Caco-2 (cell line): ENCODE measurements at regions of chr10 and their contacts with region 1.

Region 1: GRCh38 chr10:103888113-103888841 is 29.7 kb downstream of the STN1 start:
- DNase-seq: peak in 1 of 2 experiments; percentile 36
- H3K4me3 ChIP-seq: no peak overlapping the region
- H3K4me3 Mint-ChIP-seq: no peak overlapping the region
- H3K27ac Mint-ChIP-seq: peak overlapping the region; percentile 29
- H3K4me1 ChIP-seq: peaks cover 26% of the 10 kb centered on the region
- H3K4me1 Mint-ChIP-seq: peaks cover 20% of the 10 kb centered on the region
- H3K27me3 ChIP-seq: no peaks in the 10 kb centered on the region
- H3K27me3 Mint-ChIP-seq: no peaks in the 10 kb centered on the region
- CTCF ChIP-seq: peak; percentile 69 to 79

Region 2: GRCh38 chr10:103598654-103599115 is 289.6 kb before region 1 on chr10:
- CTCF ChIA-PET with region 1: no interaction called
- POLR2A ChIA-PET with region 1: no interaction called
- intact Hi-C with region 1: loop called (anchors 1 kb)
- DNase-seq: peak; percentile 79 to 80
- H3K4me3 ChIP-seq: no peak overlapping the region
- H3K4me3 Mint-ChIP-seq: no peak overlapping the region
- H3K27ac Mint-ChIP-seq: no peak overlapping the region
- H3K4me1 ChIP-seq: no peaks in the 10 kb centered on the region
- H3K4me1 Mint-ChIP-seq: peaks cover 7% of the 10 kb centered on the region
- H3K27me3 ChIP-seq: no peaks in the 10 kb centered on the region
- H3K27me3 Mint-ChIP-seq: no peaks in the 10 kb centered on the region
- CTCF ChIP-seq: peak; percentile 76 to 82

Region 3: GRCh38 chr10:103793920-103794883 is 94.1 kb before region 1 on chr10:
- CTCF ChIA-PET with region 1: no interaction called
- POLR2A ChIA-PET with region 1: no interaction called
- intact Hi-C with region 1: loop called (anchors 1 kb)
- DNase-seq: peak; percentile 94 to 97
- H3K4me3 ChIP-seq: 0 out of 2 replicates have a peak overlapping the region, but pooled peaks have one; percentile 1
- H3K4me3 Mint-ChIP-seq: peak overlapping the region; percentile 62
- H3K27ac Mint-ChIP-seq: peak overlapping the region; percentile 90
- H3K4me1 ChIP-seq: peaks cover 49% of the 10 kb centered on the region
- H3K4me1 Mint-ChIP-seq: peaks cover 31% of the 10 kb centered on the region
- H3K27me3 ChIP-seq: no peaks in the 10 kb centered on the region
- H3K27me3 Mint-ChIP-seq: no peaks in the 10 kb centered on the region
- CTCF ChIP-seq: no peak

Region 4: DNA sequence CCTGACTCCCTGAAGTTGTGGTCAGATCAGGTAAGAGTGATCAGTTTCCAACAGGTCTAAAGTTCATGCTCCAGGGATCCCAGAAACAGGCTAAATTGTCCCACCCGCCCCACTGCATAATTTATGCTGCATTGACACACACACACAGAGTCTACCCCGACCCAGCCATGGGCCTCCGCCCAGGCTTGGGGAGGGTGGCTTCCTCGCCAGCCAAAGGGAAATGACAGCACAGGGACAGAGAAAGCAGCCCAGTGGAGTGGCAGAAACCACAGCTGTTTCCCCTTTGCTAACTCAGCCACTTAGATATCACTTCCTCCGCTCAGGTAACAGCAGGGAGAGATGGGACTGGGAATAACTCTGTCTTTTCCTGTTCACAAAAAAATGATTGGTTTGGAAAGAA is 42.3 kb before region 1 on chr10:
- CTCF ChIA-PET with region 1: no interaction called
- POLR2A ChIA-PET with region 1: no interaction called
- intact Hi-C with region 1: no loop called
- DNase-seq: no peak
- H3K4me3 ChIP-seq: no peak overlapping the region
- H3K4me3 Mint-ChIP-seq: no peak overlapping the region
- H3K27ac Mint-ChIP-seq: no peak overlapping the region
- H3K4me1 ChIP-seq: 0 out of 2 replicates have a peak, but pooled peaks cover 4% of the 10 kb centered on the region
- H3K4me1 Mint-ChIP-seq: peaks cover 20% of the 10 kb centered on the region
- H3K27me3 ChIP-seq: no peaks in the 10 kb centered on the region
- H3K27me3 Mint-ChIP-seq: no peaks in the 10 kb centered on the region
- CTCF ChIP-seq: no peak

Region 5: GRCh38 chr10:103918053-103918846 is 30.0 kb after region 1 on chr10 and contains the start of gene STN1:
- CTCF ChIA-PET with region 1: interaction called, 6 read pairs
- POLR2A ChIA-PET with region 1: interaction called, 4 read pairs
- intact Hi-C with region 1: loop called (anchors 1 kb)
- DNase-seq: peak; percentile 98
- H3K4me3 ChIP-seq: peak within 1 kb of the TSS; percentile 64
- H3K4me3 Mint-ChIP-seq: peak within 1 kb of the TSS; percentile 95
- H3K27ac Mint-ChIP-seq: peak within 1 kb of the TSS; percentile 94
- H3K4me1 ChIP-seq: peaks cover 21% of the 10 kb centered on the region
- H3K4me1 Mint-ChIP-seq: no peaks in the 10 kb centered on the region
- H3K27me3 ChIP-seq: no peaks in the 10 kb centered on the region
- H3K27me3 Mint-ChIP-seq: no peaks in the 10 kb centered on the region
- CTCF ChIP-seq: peak in 1 of 2 experiments; percentile 44
- total RNA-seq, gene STN1: 15.9 and 16.1 TPM in 2 replicates

Region 6: GRCh38 chr10:103983367-103983911 is 95.2 kb after region 1 on chr10:
- CTCF ChIA-PET with region 1: interaction called, 3 read pairs
- POLR2A ChIA-PET with region 1: no interaction called
- intact Hi-C with region 1: loop called (anchors 5 kb)
- DNase-seq: no peak
- H3K4me3 ChIP-seq: no peak overlapping the region
- H3K4me3 Mint-ChIP-seq: no peak overlapping the region
- H3K27ac Mint-ChIP-seq: no peak overlapping the region
- H3K4me1 ChIP-seq: peaks cover 10% of the 10 kb centered on the region
- H3K4me1 Mint-ChIP-seq: peaks cover 7% of the 10 kb centered on the region
- H3K27me3 ChIP-seq: no peaks in the 10 kb centered on the region
- H3K27me3 Mint-ChIP-seq: no peaks in the 10 kb centered on the region
- CTCF ChIP-seq: no peak

Region 7: GRCh38 chr10:104080762-104081161 is 192.5 kb after region 1 on chr10:
- CTCF ChIA-PET with region 1: interaction called, 8 read pairs
- POLR2A ChIA-PET with region 1: no interaction called
- intact Hi-C with region 1: loop called (anchors 1 kb)
- DNase-seq: peak in 1 of 2 experiments; percentile 26
- H3K4me3 ChIP-seq: no peak overlapping the region
- H3K4me3 Mint-ChIP-seq: no peak overlapping the region
- H3K27ac Mint-ChIP-seq: no peak overlapping the region
- H3K4me1 ChIP-seq: peaks cover 7% of the 10 kb centered on the region
- H3K4me1 Mint-ChIP-seq: peaks cover 14% of the 10 kb centered on the region
- H3K27me3 ChIP-seq: no peaks in the 10 kb centered on the region
- H3K27me3 Mint-ChIP-seq: no peaks in the 10 kb centered on the region
- CTCF ChIP-seq: peak; percentile 53 to 65

Region 8: GRCh38 chr10:104209575-104210198 is 321.4 kb after region 1 on chr10:
- CTCF ChIA-PET with region 1: interaction called, 3 read pairs
- POLR2A ChIA-PET with region 1: no interaction called
- intact Hi-C with region 1: loop called (anchors 1 kb)
- DNase-seq: peak in 1 of 2 experiments; percentile 54
- H3K4me3 ChIP-seq: no peak overlapping the region
- H3K4me3 Mint-ChIP-seq: no peak overlapping the region
- H3K27ac Mint-ChIP-seq: no peak overlapping the region
- H3K4me1 ChIP-seq: no peaks in the 10 kb centered on the region
- H3K4me1 Mint-ChIP-seq: no peaks in the 10 kb centered on the region
- H3K27me3 ChIP-seq: no peaks in the 10 kb centered on the region
- H3K27me3 Mint-ChIP-seq: no peaks in the 10 kb centered on the region
- CTCF ChIP-seq: peak; percentile 75 to 76